ENCODE measurements at regions of chr14 and their contacts with region 1.

Region 1: GRCh38 chr14:24271134-24271833 is at the start of gene RABGGTA:
- DNase-seq: peak; percentile 88
- ATAC-seq: peak; percentile 83
- H3K4me3 Mint-ChIP-seq: peak within 1 kb of the TSS; percentile 90
- H3K27ac Mint-ChIP-seq: peak within 1 kb of the TSS; percentile 96
- H3K4me1 Mint-ChIP-seq: peaks cover 57% of the 10 kb centered on the region
- H3K27me3 Mint-ChIP-seq: no peaks in the 10 kb centered on the region
- CTCF ChIP-seq: no peak
- total RNA-seq, gene RABGGTA: 53.6 and 70.5 TPM in 2 replicates

Region 2: DNA sequence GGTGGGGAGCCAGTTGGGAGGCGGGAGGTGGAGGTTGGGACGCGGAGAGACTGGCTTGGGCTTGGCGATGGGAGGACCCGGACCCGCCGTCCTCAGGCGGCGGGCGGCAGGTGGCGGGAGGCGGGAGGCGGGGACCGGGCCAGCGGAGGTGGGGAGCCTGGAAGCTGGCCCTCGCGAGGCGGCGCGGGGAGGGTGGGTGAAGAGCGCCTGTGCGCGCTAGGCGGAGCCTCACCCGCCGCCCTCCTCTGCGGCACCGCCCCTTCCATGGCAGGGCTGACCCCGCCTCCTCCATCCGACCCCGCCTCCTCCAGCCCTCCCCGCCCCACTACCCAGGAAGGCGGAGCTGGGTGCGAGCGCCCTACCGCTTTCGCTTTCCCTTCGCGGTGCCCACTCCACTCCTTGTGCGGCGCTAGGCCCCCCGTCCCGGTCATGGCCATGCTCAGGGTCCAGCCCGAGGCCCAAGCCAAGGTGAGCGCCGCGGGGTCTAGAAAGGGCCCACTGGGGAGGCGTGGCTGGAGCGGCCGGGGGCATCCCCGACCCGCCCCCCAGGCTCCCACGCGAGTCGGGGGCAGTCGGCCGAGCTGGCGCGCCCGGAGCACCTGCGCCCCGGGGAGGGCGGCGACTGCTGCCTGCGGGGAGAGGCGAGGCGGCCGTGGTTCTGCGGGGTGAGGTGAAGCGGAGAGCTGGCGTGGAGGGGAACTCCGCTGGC is 135.3 kb before region 1 on chr14 and contains the start of gene PSME1:
- CTCF ChIA-PET with region 1: interaction called, 5 read pairs
- POLR2A ChIA-PET with region 1: interaction called, 12 read pairs
- intact Hi-C with region 1: no loop called
- DNase-seq: peak; percentile 94
- ATAC-seq: peak; percentile 97
- H3K4me3 Mint-ChIP-seq: peak within 1 kb of the TSS; percentile 91
- H3K27ac Mint-ChIP-seq: peak within 1 kb of the TSS; percentile 90
- H3K4me1 Mint-ChIP-seq: peaks cover 57% of the 10 kb centered on the region
- H3K27me3 Mint-ChIP-seq: no peaks in the 10 kb centered on the region
- CTCF ChIP-seq: no peak
- total RNA-seq, gene PSME1: 406 and 449 TPM in 2 replicates

Region 3: DNA sequence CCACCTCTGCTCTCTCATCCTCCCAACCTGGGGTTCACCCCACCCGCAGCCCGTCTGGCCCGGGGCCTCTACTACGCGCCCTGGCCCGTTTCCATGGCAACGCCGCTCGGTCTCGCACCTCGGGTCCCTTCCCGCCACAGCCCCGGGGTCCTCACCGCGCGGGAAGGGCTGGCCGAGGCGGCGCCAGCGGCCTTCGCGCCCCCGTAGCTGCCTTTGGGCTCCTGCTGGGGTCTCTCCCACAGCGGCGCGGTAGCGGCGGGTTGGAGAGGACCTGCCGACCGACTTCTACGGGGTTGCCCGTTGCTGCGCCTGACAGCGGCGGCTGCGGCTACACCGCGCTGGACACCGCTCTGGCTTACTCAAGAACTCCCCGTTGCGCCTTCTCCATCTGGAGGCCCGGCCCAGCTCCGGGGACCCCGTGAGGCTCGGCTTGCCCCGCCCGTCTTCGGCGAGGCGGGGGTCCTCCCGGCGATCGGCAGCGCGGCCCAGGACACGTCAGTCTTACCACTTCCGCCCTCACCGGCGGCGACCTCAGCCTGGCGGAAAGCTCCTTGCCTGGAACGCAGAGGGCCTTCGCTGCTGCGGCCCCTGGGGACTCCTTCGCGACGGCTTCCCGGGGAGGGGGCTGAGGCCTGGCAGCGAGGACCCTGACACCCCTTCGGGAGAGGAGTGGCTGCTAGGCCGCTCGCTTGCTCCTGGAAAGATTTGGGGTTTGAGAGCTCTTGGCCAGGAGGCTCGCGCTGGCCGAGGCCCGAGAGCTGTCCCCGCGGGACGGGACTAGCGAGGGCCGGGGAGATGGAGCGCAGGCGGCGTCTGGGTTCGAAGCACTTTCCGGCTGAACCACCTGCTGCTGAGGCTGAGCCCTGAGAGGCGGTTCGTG is 75.9 kb before region 1 on chr14 and contains the start of gene TM9SF1:
- CTCF ChIA-PET with region 1: interaction called, 4 read pairs
- POLR2A ChIA-PET with region 1: interaction called, 14 read pairs
- intact Hi-C with region 1: loop called (anchors 2 kb)
- DNase-seq: peak; percentile 91
- ATAC-seq: peak; percentile 83
- H3K4me3 Mint-ChIP-seq: peak within 1 kb of the TSS; percentile 96
- H3K27ac Mint-ChIP-seq: peak within 1 kb of the TSS; percentile 97
- H3K4me1 Mint-ChIP-seq: peaks cover 48% of the 10 kb centered on the region
- H3K27me3 Mint-ChIP-seq: no peaks in the 10 kb centered on the region
- CTCF ChIP-seq: no peak
- total RNA-seq, gene TM9SF1: 24.5 and 26.3 TPM in 2 replicates

Region 4: DNA sequence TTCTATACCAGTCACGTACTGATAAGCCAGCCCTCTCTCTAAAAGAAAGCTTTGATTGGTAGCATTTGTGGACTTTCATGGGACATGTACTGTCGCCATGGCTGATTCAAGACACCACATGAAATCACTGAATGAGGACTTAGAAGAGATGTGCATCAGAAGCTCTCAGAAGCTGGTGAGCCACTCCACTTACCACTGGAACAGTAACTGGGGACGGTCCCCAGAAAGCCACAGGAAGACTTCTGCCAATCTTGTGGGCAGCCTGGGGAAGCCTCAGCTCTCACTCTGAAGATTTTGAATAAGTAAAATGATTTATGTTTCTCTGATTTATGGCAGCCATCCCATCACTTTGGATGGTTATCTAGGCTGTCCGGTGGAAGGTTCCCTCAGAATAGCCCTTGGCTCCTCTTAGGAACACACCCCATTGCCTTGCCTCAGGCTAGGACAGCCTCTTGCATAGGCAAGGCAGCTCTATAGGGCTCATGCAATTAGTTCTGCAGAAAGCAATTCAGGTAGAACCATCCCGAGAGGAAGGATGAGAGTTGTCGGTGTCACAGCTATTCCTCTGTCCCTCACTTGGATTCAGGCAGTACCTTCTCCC is 18.5 kb after region 1 on chr14:
- CTCF ChIA-PET with region 1: interaction called, 64 read pairs
- POLR2A ChIA-PET with region 1: interaction called, 25 read pairs
- intact Hi-C with region 1: loop called (anchors 1 kb)
- DNase-seq: no peak
- ATAC-seq: peak; percentile 97
- H3K4me3 Mint-ChIP-seq: peak overlapping the region; percentile 15
- H3K27ac Mint-ChIP-seq: peak overlapping the region; percentile 70
- H3K4me1 Mint-ChIP-seq: peaks cover 27% of the 10 kb centered on the region
- H3K27me3 Mint-ChIP-seq: no peaks in the 10 kb centered on the region
- CTCF ChIP-seq: no peak

Region 5: GRCh38 chr14:24366721-24367513 is 95.6 kb after region 1 on chr14:
- CTCF ChIA-PET with region 1: no interaction called
- POLR2A ChIA-PET with region 1: no interaction called
- intact Hi-C with region 1: loop called (anchors 5 kb)
- DNase-seq: peak; percentile 100
- ATAC-seq: peak; percentile 83
- H3K4me3 Mint-ChIP-seq: peak overlapping the region; percentile 85
- H3K27ac Mint-ChIP-seq: peak overlapping the region; percentile 80
- H3K4me1 Mint-ChIP-seq: peaks cover 33% of the 10 kb centered on the region
- H3K27me3 Mint-ChIP-seq: peaks cover 5% of the 10 kb centered on the region
- CTCF ChIP-seq: no peak

Measured in activated B cell treated with CpG ODN at 0.5 μM for 24 hours (primary cell).